Left ventricle myocardium inferior (tissue), 1 donor: ENCODE measurements at regions of chr14 and their contacts with region 1.

Region 1: DNA sequence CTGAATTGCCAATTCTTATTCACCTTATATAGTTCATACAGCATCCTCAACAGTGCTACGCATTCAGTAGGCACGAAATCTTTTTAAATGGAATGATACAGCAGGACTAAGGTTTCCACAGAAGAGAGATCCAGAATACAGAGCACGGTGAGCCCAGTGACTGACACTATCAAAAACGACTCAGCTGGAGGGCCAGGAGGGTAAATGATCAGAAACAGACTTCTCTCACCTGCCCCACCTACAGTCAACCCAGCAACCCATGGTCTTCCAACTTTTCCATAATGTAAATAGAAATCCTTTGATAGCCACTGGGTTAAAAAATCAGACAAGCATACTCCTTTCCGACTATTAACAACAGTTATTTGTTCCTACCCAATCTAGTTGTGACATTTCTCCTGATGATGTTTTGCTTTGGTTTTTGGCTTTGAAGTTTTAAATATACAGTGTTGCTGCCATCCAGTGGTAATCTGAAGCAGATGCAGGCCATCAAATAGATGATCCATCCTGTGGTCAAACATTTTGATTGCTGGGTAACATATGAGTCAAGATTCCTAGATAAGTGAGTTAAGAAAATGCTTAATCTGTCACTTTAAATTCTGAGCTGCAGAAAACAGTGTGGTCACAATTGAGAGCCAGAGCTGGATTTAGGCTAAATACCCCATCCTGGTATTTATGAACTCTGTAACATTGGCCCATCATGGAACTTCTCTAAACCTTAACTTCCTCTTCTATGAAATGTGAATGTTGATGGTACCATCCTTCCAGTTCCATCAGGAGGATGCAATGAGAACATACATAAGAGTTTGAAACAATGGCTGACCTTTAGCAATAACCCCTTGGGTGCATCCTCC is 42.0 kb downstream of the GPHB5 start:
- DNase-seq: no peak
- H3K4me3 ChIP-seq: no peak overlapping the region
- H3K27ac ChIP-seq: peak overlapping the region; percentile 60
- H3K4me1 ChIP-seq: peaks cover 29% of the 10 kb centered on the region
- H3K27me3 ChIP-seq: no peaks in the 10 kb centered on the region
- CTCF ChIP-seq: peak; percentile 91

Region 2: GRCh38 chr14:62179367-62180018 is 1097.2 kb before region 1 on chr14:
- intact Hi-C with region 1: loop called (anchors 10 kb)
- DNase-seq: peak; percentile 16
- H3K4me3 ChIP-seq: no peak overlapping the region
- H3K27ac ChIP-seq: no peak overlapping the region
- H3K4me1 ChIP-seq: no peaks in the 10 kb centered on the region
- H3K27me3 ChIP-seq: peaks cover 21% of the 10 kb centered on the region
- CTCF ChIP-seq: peak; percentile 60

Region 3: DNA sequence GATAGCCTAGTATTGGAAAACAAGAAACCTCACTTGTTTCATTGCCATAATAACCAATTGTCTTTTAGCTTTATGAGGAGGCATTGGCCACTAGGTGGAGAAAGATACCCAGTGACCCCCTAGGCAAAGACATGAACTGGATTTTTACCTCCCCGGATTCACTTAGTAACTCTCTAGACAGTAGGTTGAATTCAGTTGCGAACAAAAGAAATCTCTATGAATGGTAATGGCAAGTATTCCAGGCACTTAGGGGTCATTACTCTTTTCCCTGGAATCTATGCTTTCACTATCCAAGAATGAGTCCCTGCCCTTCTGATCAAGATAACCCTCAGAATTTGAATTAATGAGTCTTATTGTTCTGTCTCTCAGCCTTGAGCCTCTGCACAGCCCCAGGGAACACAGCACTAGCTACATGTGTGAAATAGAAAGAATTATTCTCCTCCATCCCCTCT is 101.9 kb before region 1 on chr14:
- intact Hi-C with region 1: loop called (anchors 2 kb)
- DNase-seq: no peak
- H3K4me3 ChIP-seq: no peak overlapping the region
- H3K27ac ChIP-seq: peak overlapping the region; percentile 37
- H3K4me1 ChIP-seq: peaks cover 26% of the 10 kb centered on the region
- H3K27me3 ChIP-seq: no peaks in the 10 kb centered on the region
- CTCF ChIP-seq: peak; percentile 74